A673 (cell line): ENCODE measurements at regions of chr19 and their contacts with region 1.

Region 1: GRCh38 chr19:14795078-14795721 is 16.8 kb upstream of the ADGRE2 start:
- DNase-seq: peak; percentile 69
- H3K4me3 ChIP-seq: no peak overlapping the region
- H3K27ac ChIP-seq: no peak overlapping the region
- H3K4me1 ChIP-seq: peaks cover 3% of the 10 kb centered on the region
- H3K27me3 ChIP-seq: no peaks in the 10 kb centered on the region
- CTCF ChIP-seq: no peak

Region 2: GRCh38 chr19:14699641-14700040 is 95.6 kb before region 1 on chr19:
- CTCF ChIA-PET with region 1: interaction called, 11 read pairs
- POLR2A ChIA-PET with region 1: no interaction called
- intact Hi-C with region 1: no loop called
- DNase-seq: no peak
- H3K4me3 ChIP-seq: no peak overlapping the region
- H3K27ac ChIP-seq: no peak overlapping the region
- H3K4me1 ChIP-seq: no peaks in the 10 kb centered on the region
- H3K27me3 ChIP-seq: no peaks in the 10 kb centered on the region
- CTCF ChIP-seq: no peak